Panc1 (cell line): ENCODE measurements at regions of chr1 and their contacts with region 1.

Region 1: GRCh38 chr1:92447033-92447681 is 39.6 kb downstream of the GFI1 start:
- DNase-seq: no peak
- ATAC-seq: no peak
- H3K4me3 ChIP-seq: no peak overlapping the region
- H3K27ac ChIP-seq: no peak overlapping the region
- H3K4me1 ChIP-seq: no peaks in the 10 kb centered on the region
- H3K27me3 ChIP-seq: peaks cover 2% of the 10 kb centered on the region; the same call in 1 of the 2 replicates
- CTCF ChIP-seq: no peak

Region 2: DNA sequence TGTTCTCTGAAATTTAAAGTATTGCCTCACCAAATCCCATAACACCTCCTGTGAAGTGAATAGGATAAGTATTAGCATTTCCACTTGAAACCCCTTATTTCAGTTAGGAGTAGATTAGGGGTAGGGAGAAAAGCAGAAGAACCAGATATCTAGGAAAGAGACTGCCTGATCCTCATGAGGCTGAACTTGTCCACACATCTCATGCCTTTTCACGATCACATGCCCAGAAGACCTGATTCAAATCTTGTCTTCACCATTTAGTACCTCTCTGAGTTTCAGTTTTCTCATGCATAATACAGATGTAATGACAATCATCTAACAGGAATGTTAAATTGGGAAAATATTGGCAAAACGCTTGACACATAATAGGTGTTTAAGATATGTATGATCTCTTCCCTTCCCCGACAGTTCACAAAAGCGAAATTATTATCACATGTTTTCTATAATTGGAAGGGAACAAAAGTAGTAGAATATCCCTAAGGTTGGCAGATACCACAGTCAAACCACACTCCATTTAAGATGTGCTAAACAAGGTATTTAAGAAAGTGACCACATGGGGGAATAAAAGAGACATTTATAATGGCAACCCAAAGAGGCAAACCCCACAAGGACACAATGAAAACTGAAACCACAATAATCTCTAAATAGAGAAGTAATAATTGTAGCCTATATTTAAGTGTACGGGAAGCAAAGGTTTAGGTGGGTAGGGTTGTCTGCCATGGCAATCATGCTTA is 14.4 kb after region 1 on chr1:
- CTCF ChIA-PET with region 1: no interaction called
- POLR2A ChIA-PET with region 1: interaction called, 20 read pairs
- in situ Hi-C with region 1: no loop called
- intact Hi-C with region 1: no loop called
- DNase-seq: no peak
- ATAC-seq: no peak
- H3K4me3 ChIP-seq: no peak overlapping the region
- H3K27ac ChIP-seq: no peak overlapping the region
- H3K4me1 ChIP-seq: no peaks in the 10 kb centered on the region
- H3K27me3 ChIP-seq: no peaks in the 10 kb centered on the region
- CTCF ChIP-seq: no peak